CD14-positive monocyte (primary cell): ENCODE measurements at regions of chr7 and their contacts with region 1.

Region 1: GRCh38 chr7:26365077-26365900 is 73.6 kb downstream of the SNX10 start:
- DNase-seq: peak; percentile 82 to 90 (median 85)
- H3K4me3 ChIP-seq: no peak overlapping the region
- H3K4me3 Mint-ChIP-seq: no peak overlapping the region
- H3K27ac ChIP-seq: peak overlapping the region in 1 of 2 donors; percentile 65
- H3K27ac Mint-ChIP-seq: peak overlapping the region in 6 of 7 donors; percentile 64 to 90 (median 79)
- H3K4me1 ChIP-seq: peaks cover 14 to 22% of the 10 kb centered on the region in 2 donors
- H3K4me1 Mint-ChIP-seq: peaks cover 26% of the 10 kb centered on the region
- H3K27me3 ChIP-seq: no peaks in the 10 kb centered on the region
- H3K27me3 Mint-ChIP-seq: peaks cover 0 to 2% (median 0%) of the 10 kb centered on the region in 3 donors
- CTCF ChIP-seq: peak; percentile 82

Region 2: GRCh38 chr7:25894902-25895791 is 470.1 kb before region 1 on chr7:
- intact Hi-C with region 1: loop called (anchors 2 to 5 kb)
- DNase-seq: peak; percentile 87 to 95 (median 89)
- H3K4me3 ChIP-seq: peak overlapping the region in 1 of 3 experiments; percentile 48
- H3K4me3 Mint-ChIP-seq: peak overlapping the region; percentile 50 to 83
- H3K27ac ChIP-seq: no peak overlapping the region
- H3K27ac Mint-ChIP-seq: peak overlapping the region in 6 of 7 donors; percentile 75 to 89 (median 80)
- H3K4me1 ChIP-seq: peaks cover 19 to 29% of the 10 kb centered on the region in 2 donors
- H3K4me1 Mint-ChIP-seq: peaks cover 36% of the 10 kb centered on the region
- H3K27me3 ChIP-seq: peaks cover 80 to 83% of the 10 kb centered on the region in 2 donors
- H3K27me3 Mint-ChIP-seq: peaks cover 74 to 88% (median 78%) of the 10 kb centered on the region in 3 donors
- CTCF ChIP-seq: peak; percentile 88

Region 3: DNA sequence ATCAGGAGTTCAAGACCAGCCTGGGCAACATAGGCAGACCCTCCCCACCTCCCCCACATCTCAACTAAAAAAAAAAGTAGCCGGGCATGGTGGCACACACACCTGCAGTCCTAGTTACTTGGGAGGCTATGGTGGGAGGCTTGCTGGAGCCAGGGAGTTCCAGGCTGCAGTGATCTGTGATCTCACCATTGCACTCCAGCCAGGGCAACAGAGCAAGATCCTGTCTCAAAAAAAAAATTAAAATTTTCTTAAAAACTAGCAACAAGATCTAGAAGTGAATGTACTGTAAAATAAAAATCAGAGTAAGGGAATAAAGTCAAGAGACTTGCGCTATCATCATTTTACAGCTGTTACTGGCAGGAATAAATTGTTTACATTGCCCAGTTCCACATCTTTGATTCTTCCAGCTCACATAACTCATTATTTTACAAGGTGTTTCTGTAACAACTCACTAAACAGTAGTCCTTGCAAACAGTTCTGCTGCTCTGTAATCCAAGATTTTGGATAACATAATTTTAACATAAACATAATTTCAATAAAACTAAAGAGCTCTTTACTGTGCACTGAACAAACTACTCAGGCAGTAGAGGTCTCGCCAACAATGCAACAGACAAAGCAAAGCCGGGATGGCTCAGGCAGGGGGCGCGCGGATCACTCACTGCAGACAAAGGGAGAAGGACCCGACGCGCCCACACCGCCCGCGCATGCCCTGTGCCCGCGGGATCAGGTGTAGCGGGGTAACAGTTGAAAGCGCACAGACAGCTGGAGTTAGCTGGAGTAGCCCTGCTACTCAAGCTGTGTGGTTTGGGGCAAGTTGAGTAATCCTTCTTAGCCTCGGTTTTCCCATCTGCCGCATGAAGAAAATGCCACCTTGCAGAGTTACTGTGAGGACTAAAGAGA is 286.6 kb before region 1 on chr7:
- intact Hi-C with region 1: loop called (anchors 5 to 10 kb)
- DNase-seq: peak; percentile 39 to 77 (median 61)
- H3K4me3 ChIP-seq: peak overlapping the region in 1 of 3 experiments; percentile 43
- H3K4me3 Mint-ChIP-seq: peak overlapping the region; percentile 12 to 75
- H3K27ac ChIP-seq: no peak overlapping the region
- H3K27ac Mint-ChIP-seq: no peak overlapping the region
- H3K4me1 ChIP-seq: peaks cover 4 to 7% of the 10 kb centered on the region in 2 donors
- H3K4me1 Mint-ChIP-seq: peaks cover 6% of the 10 kb centered on the region
- H3K27me3 ChIP-seq: peaks cover 27 to 29% of the 10 kb centered on the region in 2 donors
- H3K27me3 Mint-ChIP-seq: peaks cover 27 to 42% (median 34%) of the 10 kb centered on the region in 3 donors
- CTCF ChIP-seq: peak; percentile 61

Region 4: DNA sequence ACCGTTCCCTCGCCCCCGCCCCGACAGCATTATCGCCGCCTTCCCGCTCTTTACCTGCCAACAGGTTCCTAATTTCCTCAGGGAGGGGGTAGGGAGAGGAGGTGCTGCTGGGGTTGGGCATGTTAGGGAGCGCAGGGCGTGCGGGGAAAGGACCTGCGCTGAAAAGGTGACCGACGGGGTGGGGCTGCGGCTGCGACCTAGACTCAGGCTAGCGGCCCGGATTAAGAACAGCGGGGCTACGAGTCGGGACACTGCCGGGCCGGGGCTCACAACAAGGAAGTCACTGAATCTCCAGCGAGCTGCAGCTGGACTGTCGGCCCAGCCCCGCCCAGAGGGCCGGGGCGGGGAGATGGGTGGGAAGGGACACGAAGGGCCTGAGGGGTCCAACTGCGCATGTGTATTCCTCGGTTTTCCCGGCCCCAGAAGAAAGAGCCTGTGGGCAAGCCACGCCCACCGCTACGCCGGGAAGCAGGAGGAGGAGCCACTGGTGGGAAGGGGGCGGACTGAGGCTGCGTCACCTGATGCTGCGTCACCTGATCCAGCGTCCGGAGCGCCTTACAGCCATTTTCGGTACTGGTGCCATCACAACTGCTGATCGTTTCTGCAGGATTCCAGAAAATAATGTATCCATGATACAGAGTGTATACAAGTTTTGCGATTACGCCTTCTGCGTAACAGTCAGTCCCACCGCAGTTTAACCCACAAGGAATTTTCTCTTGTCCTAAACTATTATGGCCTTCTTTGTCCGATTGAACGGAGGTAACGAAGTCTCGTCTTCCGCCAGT is 499.2 kb after region 1 on chr7 and contains the start of gene SKAP2:
- intact Hi-C with region 1: loop called in 1 of 2 experiments (anchors 10 kb)
- DNase-seq: peak; percentile 98 to 99 (median 99)
- H3K4me3 ChIP-seq: peak within 1 kb of the TSS; percentile 71 to 97 (median 75)
- H3K4me3 Mint-ChIP-seq: peak within 1 kb of the TSS; percentile 97 to 99
- H3K27ac ChIP-seq: peak within 1 kb of the TSS; percentile 91 to 95
- H3K27ac Mint-ChIP-seq: peak within 1 kb of the TSS; percentile 97 to 100 (median 99)
- H3K4me1 ChIP-seq: peaks cover 7 to 43% of the 10 kb centered on the region in 2 donors
- H3K4me1 Mint-ChIP-seq: peaks cover 33% of the 10 kb centered on the region
- H3K27me3 ChIP-seq: no peaks in the 10 kb centered on the region
- H3K27me3 Mint-ChIP-seq: peaks cover 0 to 6% (median 4%) of the 10 kb centered on the region in 3 donors
- CTCF ChIP-seq: no peak
- polyA plus RNA-seq, gene SKAP2: 19.2 to 204 (median 158) TPM

Region 5: GRCh38 chr7:27160546-27161213 is 795.4 kb after region 1 on chr7:
- intact Hi-C with region 1: loop called (anchors 5 kb)
- DNase-seq: peak; percentile 70 to 84 (median 78)
- H3K4me3 ChIP-seq: peak overlapping the region; percentile 53 to 94 (median 79)
- H3K4me3 Mint-ChIP-seq: peak overlapping the region; percentile 86
- H3K27ac ChIP-seq: peak overlapping the region in 1 of 2 donors; percentile 52
- H3K27ac Mint-ChIP-seq: peak overlapping the region in 5 of 7 donors; percentile 14 to 80 (median 30)
- H3K4me1 ChIP-seq: peaks cover 60 to 77% of the 10 kb centered on the region in 2 donors
- H3K4me1 Mint-ChIP-seq: peaks cover 67% of the 10 kb centered on the region
- H3K27me3 ChIP-seq: peaks cover 61 to 92% of the 10 kb centered on the region in 2 donors
- H3K27me3 Mint-ChIP-seq: peaks cover 84 to 93% (median 85%) of the 10 kb centered on the region in 3 donors
- CTCF ChIP-seq: peak; percentile 100